Right ventricle myocardium inferior (tissue), 1 donor: ENCODE measurements at regions of chr9 and their contacts with region 1.

Region 1: GRCh38 chr9:93134015-93134739 is at the start of gene NINJ1:
- DNase-seq: peak; percentile 92
- ATAC-seq: peak; percentile 87
- total RNA-seq, gene NINJ1: 55.5 TPM

Region 2: GRCh38 chr9:92860867-92861266 is 273.3 kb before region 1 on chr9:
- intact Hi-C with region 1: no loop called
- DNase-seq: no peak
- ATAC-seq: no peak

Region 3: DNA sequence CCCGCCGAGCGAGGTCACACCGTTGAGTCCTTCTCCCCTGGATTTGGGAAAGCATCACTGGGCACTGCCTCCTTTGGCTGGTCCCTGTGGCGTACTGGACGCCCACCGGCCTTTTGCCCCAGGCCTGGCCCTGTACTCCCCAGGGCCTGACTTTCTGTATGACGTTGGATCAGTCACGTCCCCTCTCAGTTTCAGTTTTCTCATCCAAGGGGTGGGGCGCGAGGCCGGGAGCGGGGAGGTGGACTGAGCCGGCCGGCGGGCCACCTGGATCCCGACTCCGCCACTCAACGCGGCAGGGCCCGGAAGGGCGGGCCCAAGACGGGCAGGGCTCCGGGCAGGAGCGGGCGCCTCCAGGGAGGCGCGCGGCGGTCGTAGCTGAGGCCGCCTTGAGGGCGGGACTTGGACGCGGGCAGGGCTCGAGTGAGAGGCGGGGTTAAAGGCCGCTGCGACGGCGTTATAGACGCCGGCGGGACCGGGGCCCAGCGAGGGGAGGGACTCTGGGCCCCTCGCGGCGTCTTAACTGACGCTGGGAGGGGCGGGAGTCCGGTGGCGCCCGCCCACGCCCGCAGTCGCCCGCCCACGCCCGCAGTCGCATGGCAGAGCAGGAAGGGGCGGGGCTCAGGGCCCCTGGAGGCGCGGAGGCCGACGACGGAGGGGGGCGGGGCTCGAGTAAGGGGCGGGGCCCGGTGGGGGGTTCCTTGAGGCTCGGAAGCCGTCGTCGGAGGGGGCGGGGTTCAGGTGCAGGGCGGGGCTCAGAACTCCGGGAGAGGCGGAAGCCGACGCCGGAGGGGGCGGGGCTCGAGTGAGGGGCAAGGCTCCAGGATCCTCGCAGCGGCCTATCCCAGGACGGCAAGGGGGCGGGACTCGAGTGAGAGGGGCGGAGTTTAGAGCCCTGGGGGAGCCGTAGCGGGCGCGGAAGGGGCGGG is 38.7 kb before region 1 on chr9:
- intact Hi-C with region 1: loop called (anchors 5 kb)
- DNase-seq: peak; percentile 100
- ATAC-seq: peak; percentile 91

Region 4: GRCh38 chr9:93111371-93112115 is 22.6 kb before region 1 on chr9:
- intact Hi-C with region 1: loop called (anchors 2 kb)
- DNase-seq: peak; percentile 78
- ATAC-seq: no peak